Motor neuron (in vitro differentiated cells): ENCODE measurements at regions of chr1 and their contacts with region 1.

Region 1: DNA sequence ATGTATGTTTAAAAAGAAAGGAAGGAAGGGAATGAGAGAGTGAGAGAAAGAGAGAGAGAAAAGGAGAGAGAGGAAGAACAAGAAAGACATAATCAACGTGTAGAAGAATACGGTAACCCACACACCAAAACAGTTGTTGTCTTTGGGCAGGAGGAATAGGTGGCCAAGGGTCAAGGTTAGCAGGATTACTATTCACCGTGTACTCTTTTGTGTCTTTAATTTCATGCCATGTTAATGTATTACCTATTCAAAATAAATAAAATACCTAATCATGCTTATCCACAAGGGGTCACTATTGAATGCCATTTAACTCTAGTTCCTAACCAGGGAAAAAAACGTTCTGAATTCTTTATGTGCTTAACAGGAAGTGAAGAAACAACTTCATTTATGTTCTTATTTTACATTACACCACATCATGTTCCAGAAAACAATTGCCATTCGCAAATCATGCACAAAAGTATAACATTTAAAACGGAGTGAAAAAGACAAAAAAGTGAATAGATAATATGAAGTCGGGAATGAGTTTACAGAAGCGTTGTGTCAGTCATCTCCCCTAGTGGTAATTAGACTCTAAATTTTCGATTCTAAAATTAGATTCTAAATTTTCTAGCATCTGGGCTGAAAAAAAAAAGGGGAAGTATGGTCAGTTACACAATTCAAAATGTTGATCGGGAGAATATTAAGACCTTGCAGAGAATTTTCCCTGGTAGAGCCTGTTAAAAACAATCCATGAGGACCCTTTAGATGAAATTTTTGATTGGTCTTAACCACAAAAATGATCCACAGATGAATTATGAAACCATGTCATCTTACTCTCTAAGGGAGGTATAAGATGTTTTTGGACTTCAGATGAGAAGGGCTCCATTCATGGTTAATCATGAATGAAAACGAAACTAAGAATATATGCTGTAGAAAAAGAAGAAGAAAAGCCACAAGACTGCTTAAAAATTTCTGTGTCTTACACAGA is 700 bp upstream of the KMO start:
- ATAC-seq: peak; percentile 35 to 92 (median 54)
- H3K4me3 ChIP-seq: peak overlapping the region in 4 of 5 donors; percentile 10 to 18 (median 12)
- H3K27ac ChIP-seq: no peak overlapping the region
- H3K4me1 ChIP-seq: peaks cover 0 to 3% of the 10 kb centered on the region in 2 donors

Region 2: GRCh38 chr1:241308471-241308870 is 223.0 kb before region 1 on chr1:
- in situ Hi-C with region 1: no loop called
- ATAC-seq: peak in 1 of 8 experiments; percentile 42
- H3K4me3 ChIP-seq: no peak overlapping the region
- H3K27ac ChIP-seq: no peak overlapping the region
- H3K4me1 ChIP-seq: peaks cover 5 to 6% of the 10 kb centered on the region in 2 donors

Region 3: DNA sequence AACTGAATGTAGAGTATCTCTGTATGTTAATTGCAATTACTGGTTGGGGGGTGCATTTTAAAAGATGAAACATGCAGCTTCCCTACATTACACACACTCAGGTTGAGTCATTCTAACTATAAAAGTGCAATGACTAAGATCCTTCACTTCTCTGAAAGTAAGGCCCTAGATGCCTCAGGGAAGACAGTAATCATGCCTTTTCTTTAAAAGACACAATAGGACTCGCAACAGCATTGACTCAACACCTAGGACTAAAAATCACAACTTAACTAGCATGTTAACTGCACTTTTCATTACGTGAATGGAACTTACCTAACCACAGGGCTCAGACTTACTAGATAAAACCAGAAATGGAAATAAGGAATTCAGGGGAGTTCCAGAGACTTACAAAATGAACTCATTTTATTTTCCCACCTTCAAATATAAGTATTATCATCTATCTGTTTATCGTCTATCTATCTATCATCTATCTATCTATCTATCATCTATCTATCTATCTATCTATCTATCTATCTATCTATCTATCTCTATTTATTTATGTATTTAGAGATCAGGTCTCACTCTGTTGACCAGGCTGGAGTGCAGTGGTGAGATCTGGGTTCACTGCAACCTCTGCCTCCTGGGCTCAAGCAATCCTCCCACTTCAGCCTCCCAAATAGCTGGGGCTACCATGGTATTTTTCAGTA is 60.9 kb after region 1 on chr1:
- in situ Hi-C with region 1: no loop called
- ATAC-seq: peak in 5 of 8 experiments; percentile 60 to 76 (median 70)
- H3K4me3 ChIP-seq: no peak overlapping the region
- H3K27ac ChIP-seq: no peak overlapping the region
- H3K4me1 ChIP-seq: no peaks in the 10 kb centered on the region

Region 4: DNA sequence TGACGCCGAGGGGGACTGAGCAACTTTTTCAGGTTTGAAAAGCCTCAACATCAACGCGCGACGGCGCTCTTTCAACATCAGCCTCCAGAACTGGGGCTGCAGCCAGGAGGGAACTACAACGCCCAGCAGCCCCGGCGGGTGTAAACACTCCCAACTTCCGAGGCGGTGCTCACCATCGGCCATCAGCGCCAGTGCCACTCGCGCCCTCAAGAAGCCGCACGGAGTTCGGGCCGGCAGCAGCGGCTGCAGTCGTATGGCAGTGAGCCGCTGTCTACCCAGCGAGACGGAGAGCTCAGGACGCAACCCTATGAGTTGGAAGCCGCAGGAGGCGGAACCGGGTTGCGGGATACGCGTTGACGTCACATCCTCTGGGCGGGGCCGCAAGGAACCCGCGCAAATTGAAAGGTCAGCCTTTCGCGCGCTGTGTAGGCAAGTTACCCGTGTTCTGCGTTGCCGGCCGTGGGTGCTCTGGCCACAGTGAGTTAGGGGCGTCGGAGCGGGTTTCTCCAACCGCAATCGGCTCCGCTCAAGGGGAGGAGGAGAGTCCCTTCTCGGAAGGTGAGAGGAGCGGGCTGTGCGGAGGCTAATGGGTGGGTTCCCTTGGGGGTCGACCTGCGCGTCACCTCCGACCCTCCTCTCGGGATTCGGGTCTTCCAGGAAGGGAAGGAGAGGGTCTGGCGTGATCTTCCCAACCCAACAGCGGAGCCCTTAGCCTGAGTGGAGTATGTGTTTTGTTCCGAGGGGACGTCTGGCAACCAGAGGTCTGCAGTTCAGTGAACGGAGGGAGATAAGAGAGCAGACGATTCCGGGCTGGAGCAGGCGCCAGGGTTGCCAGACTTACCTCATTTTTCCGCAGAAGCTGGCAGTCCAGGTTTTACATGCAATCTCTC is 316.6 kb after region 1 on chr1 and contains the start of gene EXO1:
- in situ Hi-C with region 1: loop called in 3 of 9 experiments (anchors 25 kb)
- ATAC-seq: peak; percentile 97 to 98 (median 98)
- H3K4me3 ChIP-seq: peak within 1 kb of the TSS; percentile 91 to 99 (median 96)
- H3K27ac ChIP-seq: peak within 1 kb of the TSS; percentile 98 to 99
- H3K4me1 ChIP-seq: no peaks in the 10 kb centered on the region
- total RNA-seq, gene EXO1: 0.92 to 29.6 (median 1.6) TPM